CD8-positive, alpha-beta T cell (primary cell): ENCODE measurements at regions of chr13 and their contacts with region 1.

Region 1: GRCh38 chr13:40666045-40666904 is at the start of gene FOXO1:
- DNase-seq: peak; percentile 83 to 95 (median 91)
- ATAC-seq: peak; percentile 77
- H3K4me3 ChIP-seq: peak within 1 kb of the TSS; percentile 88 to 96
- H3K4me3 Mint-ChIP-seq: peak within 1 kb of the TSS; percentile 93
- H3K27ac ChIP-seq: peak within 1 kb of the TSS; percentile 75 to 83
- H3K27ac Mint-ChIP-seq: peak within 1 kb of the TSS; percentile 96
- H3K4me1 ChIP-seq: peaks cover 28% of the 10 kb centered on the region
- H3K4me1 Mint-ChIP-seq: peaks cover 40% of the 10 kb centered on the region
- H3K27me3 ChIP-seq: no peaks in the 10 kb centered on the region
- H3K27me3 Mint-ChIP-seq: no peaks in the 10 kb centered on the region
- CTCF ChIP-seq: no peak
- total RNA-seq, gene FOXO1: 97.2 to 97.3 TPM

Region 2: GRCh38 chr13:39692660-39693438 is 973.4 kb before region 1 on chr13:
- CTCF ChIA-PET with region 1: no interaction called
- POLR2A ChIA-PET with region 1: no interaction called
- intact Hi-C with region 1: no loop called
- DNase-seq: no peak
- ATAC-seq: no peak
- H3K4me3 ChIP-seq: no peak overlapping the region
- H3K4me3 Mint-ChIP-seq: no peak overlapping the region
- H3K27ac ChIP-seq: no peak overlapping the region
- H3K27ac Mint-ChIP-seq: no peak overlapping the region
- H3K4me1 ChIP-seq: no peaks in the 10 kb centered on the region
- H3K4me1 Mint-ChIP-seq: no peaks in the 10 kb centered on the region
- H3K27me3 ChIP-seq: no peaks in the 10 kb centered on the region
- H3K27me3 Mint-ChIP-seq: no peaks in the 10 kb centered on the region
- CTCF ChIP-seq: no peak

Region 3: GRCh38 chr13:39942552-39943273 is 723.6 kb before region 1 on chr13:
- CTCF ChIA-PET with region 1: interaction called, 20 read pairs
- POLR2A ChIA-PET with region 1: no interaction called
- intact Hi-C with region 1: no loop called
- DNase-seq: peak; percentile 40 to 81 (median 72)
- ATAC-seq: peak; percentile 99
- H3K4me3 ChIP-seq: no peak overlapping the region
- H3K4me3 Mint-ChIP-seq: no peak overlapping the region
- H3K27ac ChIP-seq: no peak overlapping the region
- H3K27ac Mint-ChIP-seq: no peak overlapping the region
- H3K4me1 ChIP-seq: no peaks in the 10 kb centered on the region
- H3K4me1 Mint-ChIP-seq: peaks cover 4% of the 10 kb centered on the region
- H3K27me3 ChIP-seq: peaks cover 0 to 2% of the 10 kb centered on the region in 2 experiments
- H3K27me3 Mint-ChIP-seq: peaks cover 2% of the 10 kb centered on the region
- CTCF ChIP-seq: peak; percentile 96

Region 4: DNA sequence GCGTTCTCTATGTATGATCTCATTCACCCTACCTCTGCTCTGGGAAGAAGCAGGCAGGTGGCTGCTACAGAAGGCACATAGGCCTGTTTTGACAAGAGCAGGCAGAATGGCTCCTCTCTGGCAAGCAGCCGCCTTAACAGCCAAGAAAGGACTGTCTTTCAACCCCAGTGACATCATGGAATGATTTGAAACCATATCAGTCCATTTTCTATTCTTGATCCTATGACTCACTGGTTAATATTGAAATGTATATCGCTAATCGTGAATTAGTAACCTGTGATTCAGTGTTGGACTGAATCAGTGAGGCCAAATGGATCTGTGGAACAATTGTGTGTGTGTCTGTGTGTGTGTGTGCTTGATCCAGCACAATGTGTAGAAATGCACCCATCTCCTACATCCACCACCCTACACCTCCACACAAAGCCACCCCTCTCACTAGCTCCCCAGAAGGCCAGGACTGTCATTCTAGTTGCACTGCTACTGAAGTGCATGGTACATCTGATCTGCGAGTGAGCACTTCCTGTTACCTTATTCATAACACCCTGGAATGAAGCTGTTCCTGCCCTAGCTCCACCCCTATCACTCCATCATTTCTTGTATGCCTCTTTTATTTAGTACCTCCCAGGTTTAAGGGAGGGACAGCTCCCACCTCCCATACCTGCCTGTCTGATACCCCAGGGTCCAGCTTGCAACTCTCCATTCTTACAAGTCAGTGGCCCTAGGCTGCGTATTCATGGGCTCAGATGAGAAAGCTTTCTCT is 459.9 kb before region 1 on chr13:
- CTCF ChIA-PET with region 1: interaction called, 3 read pairs
- POLR2A ChIA-PET with region 1: interaction called, 12 read pairs
- intact Hi-C with region 1: no loop called
- DNase-seq: peak in 7 of 9 experiments; percentile 42 to 84 (median 52)
- ATAC-seq: peak; percentile 93
- H3K4me3 ChIP-seq: no peak overlapping the region
- H3K4me3 Mint-ChIP-seq: peak overlapping the region; percentile 73
- H3K27ac ChIP-seq: peak overlapping the region; percentile 65 to 76
- H3K27ac Mint-ChIP-seq: peak overlapping the region; percentile 100
- H3K4me1 ChIP-seq: peaks cover 58% of the 10 kb centered on the region
- H3K4me1 Mint-ChIP-seq: peaks cover 77% of the 10 kb centered on the region
- H3K27me3 ChIP-seq: no peaks in the 10 kb centered on the region
- H3K27me3 Mint-ChIP-seq: no peaks in the 10 kb centered on the region
- CTCF ChIP-seq: no peak

Region 5: DNA sequence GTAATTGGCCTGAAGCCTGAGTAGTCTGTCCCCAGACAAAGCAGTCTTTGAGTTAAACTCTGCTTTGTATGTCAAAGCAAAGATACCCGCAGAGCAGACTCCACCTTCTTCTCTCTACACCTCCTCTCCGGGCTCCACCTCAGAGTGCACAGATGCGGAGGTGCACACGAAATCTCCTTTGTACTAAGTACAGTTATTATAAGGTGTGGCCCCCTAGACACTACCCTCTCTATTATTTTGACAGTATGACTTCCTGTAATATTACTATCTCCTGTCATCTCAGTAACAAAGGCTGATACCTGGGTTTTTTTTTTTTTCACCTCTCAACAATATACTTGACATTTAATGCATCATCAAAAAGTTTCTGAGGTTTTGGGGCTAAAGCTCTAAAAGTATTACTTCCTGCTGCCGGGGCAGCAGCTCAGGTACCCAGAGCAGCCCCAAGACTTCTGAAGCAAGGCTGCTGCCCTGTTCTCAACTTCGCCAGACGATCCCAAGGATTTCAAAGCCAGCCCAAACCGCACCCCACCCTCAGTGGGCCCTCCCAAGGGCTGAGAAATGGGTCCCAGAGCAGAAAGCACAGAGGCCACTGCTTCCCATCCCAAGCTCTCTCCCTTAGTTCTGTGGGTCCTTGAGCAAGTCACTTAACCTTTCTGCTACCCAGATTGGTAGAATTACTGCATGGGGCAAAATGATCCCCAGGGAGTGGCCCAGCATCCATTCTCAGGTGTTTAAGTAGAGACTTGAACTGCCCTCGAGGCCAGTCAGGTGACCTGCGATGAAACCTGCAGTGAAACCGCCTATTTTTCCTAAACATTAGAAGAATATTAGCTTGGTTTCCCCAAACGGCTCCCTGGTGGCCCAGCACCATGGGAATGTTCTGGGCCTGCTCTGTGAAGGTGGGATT is 180.4 kb before region 1 on chr13:
- CTCF ChIA-PET with region 1: interaction called, 5 read pairs
- POLR2A ChIA-PET with region 1: interaction called, 21 read pairs
- intact Hi-C with region 1: loop called (anchors 1 to 5 kb)
- DNase-seq: peak; percentile 49 to 94 (median 73)
- ATAC-seq: peak; percentile 92
- H3K4me3 ChIP-seq: peak overlapping the region in 1 of 2 experiments; percentile 33
- H3K4me3 Mint-ChIP-seq: peak overlapping the region; percentile 43
- H3K27ac ChIP-seq: peak overlapping the region; percentile 53 to 61
- H3K27ac Mint-ChIP-seq: peak overlapping the region; percentile 93
- H3K4me1 ChIP-seq: peaks cover 92% of the 10 kb centered on the region
- H3K4me1 Mint-ChIP-seq: peaks cover 91% of the 10 kb centered on the region
- H3K27me3 ChIP-seq: no peaks in the 10 kb centered on the region
- H3K27me3 Mint-ChIP-seq: no peaks in the 10 kb centered on the region
- CTCF ChIP-seq: no peak

Region 6: GRCh38 chr13:40564342-40565001 is 101.8 kb before region 1 on chr13:
- CTCF ChIA-PET with region 1: interaction called, 5 read pairs
- POLR2A ChIA-PET with region 1: no interaction called
- intact Hi-C with region 1: loop called (anchors 5 to 10 kb)
- DNase-seq: peak in 2 of 9 experiments; percentile 33 to 61
- ATAC-seq: peak; percentile 47
- H3K4me3 ChIP-seq: no peak overlapping the region
- H3K4me3 Mint-ChIP-seq: peak overlapping the region; percentile 58
- H3K27ac ChIP-seq: no peak overlapping the region
- H3K27ac Mint-ChIP-seq: peak overlapping the region; percentile 83
- H3K4me1 ChIP-seq: peaks cover 77% of the 10 kb centered on the region
- H3K4me1 Mint-ChIP-seq: peaks cover 87% of the 10 kb centered on the region
- H3K27me3 ChIP-seq: no peaks in the 10 kb centered on the region
- H3K27me3 Mint-ChIP-seq: no peaks in the 10 kb centered on the region
- CTCF ChIP-seq: no peak

Region 7: GRCh38 chr13:40597740-40598370 is 68.4 kb before region 1 on chr13:
- CTCF ChIA-PET with region 1: no interaction called
- POLR2A ChIA-PET with region 1: no interaction called
- intact Hi-C with region 1: no loop called
- DNase-seq: no peak
- ATAC-seq: no peak
- H3K4me3 ChIP-seq: no peak overlapping the region
- H3K4me3 Mint-ChIP-seq: peak overlapping the region; percentile 15
- H3K27ac ChIP-seq: no peak overlapping the region
- H3K27ac Mint-ChIP-seq: peak overlapping the region; percentile 88
- H3K4me1 ChIP-seq: peaks cover 96% of the 10 kb centered on the region
- H3K4me1 Mint-ChIP-seq: peaks cover 97% of the 10 kb centered on the region
- H3K27me3 ChIP-seq: no peaks in the 10 kb centered on the region
- H3K27me3 Mint-ChIP-seq: no peaks in the 10 kb centered on the region
- CTCF ChIP-seq: no peak

Region 8: DNA sequence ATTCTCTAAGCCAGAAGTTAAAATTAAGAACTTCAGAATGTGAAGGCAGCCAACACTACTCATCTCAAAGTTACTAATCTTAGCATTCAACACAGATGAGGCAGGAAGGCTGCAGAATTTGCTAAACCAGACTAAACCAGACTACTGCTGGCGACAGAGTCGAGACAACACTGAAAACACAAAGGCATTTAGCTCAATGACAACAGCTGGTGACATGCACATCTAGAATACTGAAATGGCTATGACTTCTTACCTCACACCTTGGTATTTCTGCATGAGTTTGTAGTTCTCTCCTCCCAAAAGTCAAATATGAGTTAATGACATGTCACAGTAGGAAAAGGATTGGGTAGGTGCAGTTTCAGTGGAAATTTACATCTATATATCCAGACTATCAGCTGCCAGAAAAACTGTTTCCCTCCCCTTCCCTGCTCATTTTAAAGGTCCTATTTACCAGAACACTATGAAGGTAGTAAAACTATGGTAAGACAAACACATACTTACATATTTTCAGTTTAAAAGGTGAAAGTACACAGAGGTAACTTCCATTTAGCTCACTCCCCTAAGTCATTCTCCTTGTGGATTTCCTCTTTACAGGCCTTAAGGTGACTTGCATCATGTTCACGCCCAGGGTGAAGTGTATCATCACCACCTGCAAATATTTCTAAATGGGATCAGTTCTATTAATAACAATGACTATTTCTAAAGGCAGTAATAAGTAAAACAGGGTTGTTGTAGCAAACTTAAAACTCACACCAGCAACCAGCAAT is 21.3 kb before region 1 on chr13:
- CTCF ChIA-PET with region 1: interaction called, 3 read pairs
- POLR2A ChIA-PET with region 1: interaction called, 8 read pairs
- intact Hi-C with region 1: loop called in 1 of 2 experiments (anchors 2 kb)
- DNase-seq: no peak
- ATAC-seq: peak; percentile 61
- H3K4me3 ChIP-seq: no peak overlapping the region
- H3K4me3 Mint-ChIP-seq: peak overlapping the region; percentile 56
- H3K27ac ChIP-seq: no peak overlapping the region
- H3K27ac Mint-ChIP-seq: peak overlapping the region; percentile 87
- H3K4me1 ChIP-seq: peaks cover 96% of the 10 kb centered on the region
- H3K4me1 Mint-ChIP-seq: peaks cover 94% of the 10 kb centered on the region
- H3K27me3 ChIP-seq: no peaks in the 10 kb centered on the region
- H3K27me3 Mint-ChIP-seq: no peaks in the 10 kb centered on the region
- CTCF ChIP-seq: no peak